HepG2 (cell line): ENCODE measurements at regions of chr20 and their contacts with region 1.

Region 1: GRCh38 chr20:50115591-50116372 is 2.8 kb upstream of the UBE2V1 start:
- DNase-seq: peak; percentile 96
- ATAC-seq: peak; percentile 82
- H3K4me3 ChIP-seq: peak overlapping the region; percentile 65 to 94 (median 78)
- H3K27ac ChIP-seq: peak overlapping the region; percentile 40
- H3K4me1 ChIP-seq: peaks cover 56% of the 10 kb centered on the region
- H3K27me3 ChIP-seq: no peaks in the 10 kb centered on the region; a peak in 1 of 5 replicates
- CTCF ChIP-seq: 0 out of 2 replicates have a peak, but pooled peaks have one; percentile 2
- EP300 ChIP-seq: no peak; a peak in 1 of 4 replicates
- POLR2A ChIP-seq: peak; percentile 57 to 90; a peak in 3 of 4 replicates
- RAD21 ChIP-seq: 0 out of 2 replicates have a peak, but pooled peaks have one; percentile 32

Region 2: GRCh38 chr20:50146732-50147662 is 31.2 kb after region 1 on chr20:
- CTCF ChIA-PET with region 1: no interaction called
- POLR2A ChIA-PET with region 1: interaction called, 43 read pairs
- in situ Hi-C with region 1: no loop called
- intact Hi-C with region 1: no loop called
- DNase-seq: no peak
- ATAC-seq: no peak
- H3K4me3 ChIP-seq: no peak overlapping the region
- H3K27ac ChIP-seq: peak overlapping the region; percentile 0
- H3K4me1 ChIP-seq: peaks cover 63% of the 10 kb centered on the region
- H3K27me3 ChIP-seq: no peaks in the 10 kb centered on the region
- CTCF ChIP-seq: no peak
- EP300 ChIP-seq: no peak
- POLR2A ChIP-seq: no peak
- RAD21 ChIP-seq: no peak

Region 3: GRCh38 chr20:50165684-50166554 is 50.1 kb after region 1 on chr20:
- CTCF ChIA-PET with region 1: interaction called, 115 read pairs
- POLR2A ChIA-PET with region 1: interaction called, 104 read pairs
- in situ Hi-C with region 1: loop called (anchors 5 kb)
- intact Hi-C with region 1: no loop called
- DNase-seq: peak; percentile 100
- ATAC-seq: peak; percentile 92
- H3K4me3 ChIP-seq: peak overlapping the region; percentile 45 to 63 (median 51)
- H3K27ac ChIP-seq: peak overlapping the region; percentile 96
- H3K4me1 ChIP-seq: peaks cover 80% of the 10 kb centered on the region
- H3K27me3 ChIP-seq: no peaks in the 10 kb centered on the region
- CTCF ChIP-seq: peak; percentile 39; the same call in 1 of the 2 replicates
- EP300 ChIP-seq: peak in 1 of 2 experiments; percentile 83
- POLR2A ChIP-seq: peak; percentile 85
- RAD21 ChIP-seq: peak; percentile 49; the same call in 1 of the 2 replicates

Region 4: DNA sequence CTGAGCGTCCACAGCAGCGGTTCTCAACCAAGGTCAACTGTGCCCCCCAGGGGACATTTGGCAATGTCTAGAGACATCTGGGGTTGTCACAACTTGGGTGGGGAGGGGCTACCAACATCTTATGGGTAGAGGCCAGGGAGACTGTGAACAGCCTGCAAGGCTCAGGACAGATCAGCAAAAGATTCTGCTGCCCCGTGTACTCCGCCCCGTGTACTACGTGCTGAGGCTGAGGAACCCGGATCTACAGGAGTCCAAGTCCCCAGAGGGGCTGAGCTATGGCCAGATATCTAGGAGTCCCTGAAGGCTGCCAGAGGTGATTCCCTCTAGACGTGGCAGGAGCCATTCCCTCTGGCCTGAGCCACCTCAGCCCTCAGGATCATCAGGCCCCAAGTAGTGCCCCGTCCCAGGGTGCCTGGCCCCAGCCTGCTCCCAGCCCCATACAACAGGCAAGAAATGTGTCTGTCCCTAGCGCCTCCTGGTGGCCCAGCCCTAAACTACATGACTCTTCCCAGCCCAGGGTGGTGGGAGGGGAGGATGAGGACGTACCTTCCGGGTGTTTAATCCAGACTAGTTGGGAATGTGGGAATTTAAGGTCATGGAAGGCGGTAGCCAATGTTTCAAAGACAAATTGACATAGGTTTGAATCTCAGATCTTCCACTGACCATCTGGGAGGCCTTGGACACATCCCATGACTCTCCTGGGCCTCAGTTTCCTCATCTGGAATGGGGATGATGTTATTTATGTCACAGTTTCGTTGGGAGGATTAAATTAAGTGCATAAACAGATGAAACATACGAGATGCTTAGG is 344.9 kb after region 1 on chr20:
- CTCF ChIA-PET with region 1: no interaction called
- POLR2A ChIA-PET with region 1: no interaction called
- in situ Hi-C with region 1: no loop called
- intact Hi-C with region 1: loop called (anchors 5 kb)
- DNase-seq: peak; percentile 91
- ATAC-seq: peak; percentile 85
- H3K4me3 ChIP-seq: peak overlapping the region; percentile 15 to 64 (median 35); a peak in 5 of 6 replicates
- H3K27ac ChIP-seq: peak overlapping the region; percentile 45
- H3K4me1 ChIP-seq: peaks cover 89% of the 10 kb centered on the region
- H3K27me3 ChIP-seq: no peaks in the 10 kb centered on the region
- CTCF ChIP-seq: peak; percentile 100
- EP300 ChIP-seq: peak in 1 of 2 experiments; percentile 60; a peak in 3 of 4 replicates
- POLR2A ChIP-seq: peak in 1 of 2 experiments; percentile 28; a peak in 1 of 4 replicates
- RAD21 ChIP-seq: peak; percentile 100